ENCODE measurements at regions of chr4 and their contacts with region 1.

Region 1: GRCh38 chr4:68310651-68311247 is 39.1 kb downstream of the YTHDC1 start:
- DNase-seq: no peak
- ATAC-seq: no peak
- H3K4me3 ChIP-seq: no peak overlapping the region
- H3K4me3 Mint-ChIP-seq: no peak overlapping the region
- H3K27ac ChIP-seq: no peak overlapping the region
- H3K27ac Mint-ChIP-seq: no peak overlapping the region
- H3K4me1 ChIP-seq: no peaks in the 10 kb centered on the region
- H3K4me1 Mint-ChIP-seq: no peaks in the 10 kb centered on the region
- H3K27me3 ChIP-seq: peaks cover 2% of the 10 kb centered on the region
- H3K27me3 Mint-ChIP-seq: peaks cover 4 to 22% of the 10 kb centered on the region in 2 donors
- CTCF ChIP-seq: no peak

Region 2: GRCh38 chr4:68324519-68325262 is 13.9 kb after region 1 on chr4:
- intact Hi-C with region 1: no loop called
- DNase-seq: no peak
- ATAC-seq: no peak
- H3K4me3 ChIP-seq: no peak overlapping the region
- H3K4me3 Mint-ChIP-seq: no peak overlapping the region
- H3K27ac ChIP-seq: no peak overlapping the region
- H3K27ac Mint-ChIP-seq: peak overlapping the region; percentile 35 to 73
- H3K4me1 ChIP-seq: no peaks in the 10 kb centered on the region
- H3K4me1 Mint-ChIP-seq: peaks cover 11 to 26% of the 10 kb centered on the region in 2 donors
- H3K27me3 ChIP-seq: no peaks in the 10 kb centered on the region
- H3K27me3 Mint-ChIP-seq: no peaks in the 10 kb centered on the region
- CTCF ChIP-seq: no peak

Region 3: GRCh38 chr4:68349649-68350360 is 39.1 kb after region 1 on chr4 and contains the start of gene YTHDC1:
- intact Hi-C with region 1: loop called (anchors 5 kb)
- DNase-seq: peak; percentile 93 to 99
- ATAC-seq: peak; percentile 93 to 98 (median 94)
- H3K4me3 ChIP-seq: peak within 1 kb of the TSS; percentile 96
- H3K4me3 Mint-ChIP-seq: peak within 1 kb of the TSS; percentile 97
- H3K27ac ChIP-seq: peak within 1 kb of the TSS; percentile 99
- H3K27ac Mint-ChIP-seq: peak within 1 kb of the TSS; percentile 98 to 99
- H3K4me1 ChIP-seq: peaks cover 14% of the 10 kb centered on the region
- H3K4me1 Mint-ChIP-seq: peaks cover 46 to 52% of the 10 kb centered on the region in 2 donors
- H3K27me3 ChIP-seq: no peaks in the 10 kb centered on the region
- H3K27me3 Mint-ChIP-seq: peaks cover 0 to 17% of the 10 kb centered on the region in 2 donors
- CTCF ChIP-seq: no peak
- total RNA-seq, gene YTHDC1: 225 to 320 (median 270) TPM

Region 4: DNA sequence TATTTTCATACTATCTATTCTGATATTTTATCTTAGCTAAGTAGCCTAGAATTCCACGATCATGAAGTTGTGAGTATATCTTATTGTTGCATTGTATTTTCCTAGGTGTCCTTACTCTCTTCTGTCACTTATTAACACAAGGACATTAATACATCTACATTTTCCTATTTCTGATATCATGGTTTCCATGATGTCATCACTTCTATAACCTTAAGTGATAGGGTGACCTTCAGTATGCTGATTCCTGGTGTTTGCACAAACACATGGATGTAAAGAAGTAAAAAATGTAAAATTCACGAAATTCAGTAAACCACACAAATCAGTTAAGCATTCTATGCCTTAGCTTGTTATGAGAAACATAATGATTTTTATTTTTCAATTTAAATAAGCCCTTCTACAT is 476.8 kb after region 1 on chr4:
- intact Hi-C with region 1: no loop called
- DNase-seq: no peak
- ATAC-seq: no peak
- H3K4me3 ChIP-seq: no peak overlapping the region
- H3K4me3 Mint-ChIP-seq: no peak overlapping the region
- H3K27ac ChIP-seq: no peak overlapping the region
- H3K27ac Mint-ChIP-seq: no peak overlapping the region
- H3K4me1 ChIP-seq: no peaks in the 10 kb centered on the region
- H3K4me1 Mint-ChIP-seq: no peaks in the 10 kb centered on the region
- H3K27me3 ChIP-seq: no peaks in the 10 kb centered on the region
- H3K27me3 Mint-ChIP-seq: no peaks in the 10 kb centered on the region
- CTCF ChIP-seq: no peak